BJ (cell line): ENCODE measurements at regions of chr2 and their contacts with region 1.

Region 1: GRCh38 chr2:151032741-151033191 is 228.9 kb downstream of the RBM43 start:
- DNase-seq: peak; percentile 99
- H3K4me3 ChIP-seq: no peak overlapping the region
- H3K27me3 ChIP-seq: no peaks in the 10 kb centered on the region
- CTCF ChIP-seq: 0 out of 2 replicates have a peak, but pooled peaks have one; percentile 2

Region 2: GRCh38 chr2:151051574-151052220 is 18.9 kb after region 1 on chr2:
- CTCF ChIA-PET with region 1: interaction called, 15 read pairs
- POLR2A ChIA-PET with region 1: no interaction called
- DNase-seq: no peak
- H3K4me3 ChIP-seq: no peak overlapping the region
- H3K27me3 ChIP-seq: no peaks in the 10 kb centered on the region
- CTCF ChIP-seq: peak; percentile 79